Activated T-helper 2 cell treated with anti-CD3 and anti-CD28 coated beads, Interferon-gamma antibody, Interleukin-2, Interleukin-4, amounts not matched to agents 10 μg/mL and 5 μg/mL and 100 μg/mL, durations not matched to agents 14 hours and 24 hours and 36 hours (primary cell): ENCODE measurements at regions of chr16 and their contacts with region 1.

Region 1: DNA sequence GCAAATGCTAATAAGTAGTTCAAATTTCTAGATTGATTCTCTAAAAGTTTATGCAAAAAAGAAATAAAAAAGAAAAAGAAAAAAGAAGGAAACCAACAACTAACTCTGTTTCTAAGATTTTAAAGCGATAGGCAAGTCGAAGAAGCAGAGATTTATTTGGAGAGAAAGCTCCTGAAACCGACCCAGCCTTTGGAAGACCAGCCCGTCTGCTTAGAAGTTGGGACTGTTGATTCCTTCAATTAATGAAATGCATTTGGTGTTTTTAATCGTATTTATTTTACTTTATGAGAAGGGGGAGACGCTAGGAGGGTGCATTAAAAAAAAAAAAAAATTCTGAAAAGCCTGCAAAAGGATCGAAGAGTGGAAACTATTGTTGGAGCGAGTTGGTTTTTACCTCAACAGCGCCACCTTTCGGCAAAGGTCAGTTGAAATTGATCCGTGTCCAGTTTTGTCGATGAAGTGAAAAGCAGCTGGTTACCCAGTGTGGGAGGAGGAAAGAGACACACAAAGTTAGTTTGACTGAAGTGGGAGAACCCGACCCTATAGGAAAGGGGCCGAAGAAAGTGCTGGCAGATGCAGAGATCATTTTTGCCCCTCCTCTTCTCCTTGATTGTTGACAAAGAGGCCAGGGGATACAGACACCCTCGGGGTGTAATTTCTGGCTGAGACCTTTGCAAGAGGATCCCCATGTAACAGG is 1.5 kb upstream of the MAF start:
- DNase-seq: peak; percentile 76
- H3K4me3 Mint-ChIP-seq: peak overlapping the region; percentile 96
- H3K27ac Mint-ChIP-seq: peak overlapping the region; percentile 85
- H3K4me1 Mint-ChIP-seq: peaks cover 47% of the 10 kb centered on the region
- H3K27me3 Mint-ChIP-seq: peaks cover 3% of the 10 kb centered on the region

Region 2: GRCh38 chr16:78503602-78504001 is 1098.5 kb before region 1 on chr16:
- intact Hi-C with region 1: loop called (anchors 5 kb)
- DNase-seq: peak; percentile 11
- H3K4me3 Mint-ChIP-seq: no peak overlapping the region
- H3K27ac Mint-ChIP-seq: no peak overlapping the region
- H3K4me1 Mint-ChIP-seq: no peaks in the 10 kb centered on the region
- H3K27me3 Mint-ChIP-seq: no peaks in the 10 kb centered on the region

Region 3: DNA sequence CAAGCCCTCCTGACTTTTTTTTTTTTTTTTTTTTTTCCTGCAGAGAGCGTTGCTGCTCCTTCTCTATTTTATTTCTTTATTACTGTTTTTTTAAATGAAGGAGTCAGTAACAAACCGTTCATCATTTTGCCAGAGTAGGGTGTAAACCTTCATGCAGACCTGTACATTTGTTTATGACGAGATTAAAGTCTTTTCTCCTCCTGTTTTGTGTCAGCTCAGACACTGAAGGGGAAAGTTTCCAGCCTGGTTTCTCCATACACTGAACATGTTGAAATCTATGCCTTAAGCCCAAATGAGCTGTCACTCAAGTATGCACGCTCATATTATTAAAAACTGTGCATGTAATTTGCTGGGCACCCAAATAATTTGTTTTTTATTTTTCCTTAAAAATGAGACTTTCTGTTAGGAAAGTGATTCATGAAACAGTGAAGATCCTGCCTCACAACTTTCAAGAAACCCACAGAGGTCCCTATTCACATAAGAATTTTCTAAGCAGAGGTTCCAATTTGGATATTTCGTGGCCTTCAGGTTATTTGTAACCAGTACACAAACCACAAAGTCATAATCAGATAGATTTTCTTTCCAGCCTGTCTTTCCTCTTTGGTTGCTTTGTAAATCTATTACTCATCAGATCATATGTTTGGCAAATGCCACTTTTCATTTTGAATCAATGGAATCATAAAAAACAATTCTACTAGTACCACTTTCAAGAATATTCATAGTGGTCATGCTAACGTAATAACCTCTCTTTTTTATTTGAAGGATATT is 701.9 kb before region 1 on chr16:
- intact Hi-C with region 1: loop called (anchors 5 kb)
- DNase-seq: no peak
- H3K4me3 Mint-ChIP-seq: no peak overlapping the region
- H3K27ac Mint-ChIP-seq: peak overlapping the region; percentile 28
- H3K4me1 Mint-ChIP-seq: peaks cover 37% of the 10 kb centered on the region
- H3K27me3 Mint-ChIP-seq: no peaks in the 10 kb centered on the region

Region 4: DNA sequence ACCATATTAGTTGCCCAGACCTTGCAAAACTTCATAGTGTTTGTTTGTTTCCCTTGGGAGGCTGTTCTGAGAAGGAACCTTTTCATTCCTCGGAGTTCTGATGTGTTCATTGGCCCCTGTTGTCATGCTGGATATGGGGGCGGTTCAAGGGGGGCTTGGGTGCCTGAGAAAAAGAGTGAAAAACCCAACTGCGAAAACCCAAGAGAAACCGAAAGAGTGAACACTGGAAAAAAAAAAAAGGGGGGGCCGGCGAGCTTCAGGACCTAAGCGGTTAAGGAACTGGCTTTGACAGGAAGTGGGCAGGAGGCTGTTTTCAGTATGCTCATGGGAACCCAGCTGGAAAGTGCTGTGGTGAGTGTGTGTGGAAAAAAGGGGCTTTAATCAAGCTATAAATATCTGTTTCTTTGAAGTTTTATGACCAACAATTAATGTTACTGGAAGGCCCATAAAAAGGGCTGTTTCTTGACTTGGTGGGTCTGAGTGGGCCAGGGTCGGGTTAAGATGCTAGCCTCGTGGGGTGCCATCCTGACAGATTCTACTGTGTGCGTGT is 512.3 kb before region 1 on chr16:
- intact Hi-C with region 1: loop called (anchors 5 kb)
- DNase-seq: peak; percentile 69
- H3K4me3 Mint-ChIP-seq: peak overlapping the region; percentile 51
- H3K27ac Mint-ChIP-seq: peak overlapping the region; percentile 89
- H3K4me1 Mint-ChIP-seq: peaks cover 53% of the 10 kb centered on the region
- H3K27me3 Mint-ChIP-seq: no peaks in the 10 kb centered on the region

Region 5: DNA sequence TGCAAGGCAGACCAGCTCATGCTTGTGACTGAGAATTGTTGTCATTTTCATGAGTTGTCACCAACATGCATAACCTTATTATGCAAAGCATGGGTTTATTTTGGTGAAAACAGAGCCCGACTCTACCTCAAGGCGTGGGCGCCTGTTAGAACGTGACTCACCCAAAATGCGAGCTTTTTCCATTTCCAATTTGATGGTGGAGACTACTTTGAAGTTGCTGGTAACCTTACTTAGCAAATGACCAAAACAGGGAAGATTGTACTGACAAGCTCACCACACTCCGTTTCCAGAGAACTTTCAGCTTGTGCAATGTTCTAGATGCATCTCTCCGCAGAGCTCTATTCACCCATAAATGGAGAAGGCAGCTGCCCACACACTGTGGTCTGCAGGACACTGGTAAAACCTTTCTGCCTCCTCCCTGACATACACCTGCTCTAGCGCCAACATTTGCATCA is 286.0 kb before region 1 on chr16:
- intact Hi-C with region 1: loop called (anchors 1 kb)
- DNase-seq: peak; percentile 56
- H3K4me3 Mint-ChIP-seq: peak overlapping the region; percentile 42
- H3K27ac Mint-ChIP-seq: peak overlapping the region; percentile 89
- H3K4me1 Mint-ChIP-seq: peaks cover 44% of the 10 kb centered on the region
- H3K27me3 Mint-ChIP-seq: no peaks in the 10 kb centered on the region

Region 6: DNA sequence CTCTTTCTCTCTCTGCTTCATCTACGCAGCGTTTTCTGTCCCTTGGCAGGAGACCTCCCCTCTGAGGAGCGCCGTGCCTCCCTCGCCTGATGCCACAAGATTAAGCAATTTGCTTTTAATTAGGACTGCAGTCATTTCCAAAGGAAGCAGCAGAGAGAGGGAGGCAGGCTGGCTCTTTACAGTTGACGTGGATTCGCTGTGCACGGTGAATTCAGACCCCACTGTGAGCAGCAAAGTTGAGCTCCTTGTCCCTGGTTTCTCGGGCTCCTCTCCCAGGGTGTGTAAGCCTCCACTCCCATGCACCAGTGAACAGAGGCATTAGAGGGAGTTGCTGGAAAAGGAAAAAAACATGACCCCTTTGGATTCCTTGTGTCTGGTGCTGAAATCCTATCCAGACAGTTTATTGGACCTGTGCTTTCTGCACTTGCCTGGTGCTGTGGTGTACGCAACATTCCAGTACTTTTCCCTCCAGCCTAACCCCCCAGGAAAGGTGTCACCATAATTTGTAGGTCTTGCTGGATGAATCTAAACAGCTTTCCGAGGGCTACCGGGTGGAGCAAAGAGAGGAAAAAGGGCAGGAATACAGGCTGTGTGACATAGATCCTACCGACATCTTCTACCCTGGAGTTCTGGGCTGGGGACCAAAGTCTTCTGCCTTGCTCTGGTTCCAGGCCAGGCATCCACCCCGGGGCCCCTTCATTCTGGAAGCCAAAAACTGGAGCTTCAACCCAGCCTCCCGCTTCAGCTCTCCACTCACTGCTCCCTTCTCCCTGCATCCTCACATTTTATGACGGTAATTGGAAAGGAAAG is 172.5 kb before region 1 on chr16:
- intact Hi-C with region 1: no loop called
- DNase-seq: no peak
- H3K4me3 Mint-ChIP-seq: no peak overlapping the region
- H3K27ac Mint-ChIP-seq: no peak overlapping the region
- H3K4me1 Mint-ChIP-seq: no peaks in the 10 kb centered on the region
- H3K27me3 Mint-ChIP-seq: peaks cover 6% of the 10 kb centered on the region

Region 7: GRCh38 chr16:79618692-79619050 is 16.6 kb after region 1 on chr16:
- intact Hi-C with region 1: loop called (anchors 1 kb)
- DNase-seq: peak; percentile 21
- H3K4me3 Mint-ChIP-seq: peak overlapping the region; percentile 54
- H3K27ac Mint-ChIP-seq: peak overlapping the region; percentile 86
- H3K4me1 Mint-ChIP-seq: peaks cover 60% of the 10 kb centered on the region
- H3K27me3 Mint-ChIP-seq: peaks cover 20% of the 10 kb centered on the region

Region 8: GRCh38 chr16:79770244-79771064 is 168.4 kb after region 1 on chr16:
- intact Hi-C with region 1: loop called (anchors 5 kb)
- DNase-seq: peak; percentile 70
- H3K4me3 Mint-ChIP-seq: peak overlapping the region; percentile 85
- H3K27ac Mint-ChIP-seq: peak overlapping the region; percentile 82
- H3K4me1 Mint-ChIP-seq: peaks cover 26% of the 10 kb centered on the region
- H3K27me3 Mint-ChIP-seq: peaks cover 18% of the 10 kb centered on the region